IMR-90 (cell line): ENCODE measurements at regions of chr14 and their contacts with region 1.

Region 1: GRCh38 chr14:71514941-71515919 is 417.0 kb upstream of the RGS6 start:
- DNase-seq: no peak
- ATAC-seq: no peak
- H3K4me3 ChIP-seq: no peak overlapping the region
- H3K27ac ChIP-seq: no peak overlapping the region
- H3K4me1 ChIP-seq: no peaks in the 10 kb centered on the region
- H3K27me3 ChIP-seq: no peaks in the 10 kb centered on the region
- CTCF ChIP-seq: no peak
- POLR2A ChIP-seq: no peak
- RAD21 ChIP-seq: no peak

Region 2: DNA sequence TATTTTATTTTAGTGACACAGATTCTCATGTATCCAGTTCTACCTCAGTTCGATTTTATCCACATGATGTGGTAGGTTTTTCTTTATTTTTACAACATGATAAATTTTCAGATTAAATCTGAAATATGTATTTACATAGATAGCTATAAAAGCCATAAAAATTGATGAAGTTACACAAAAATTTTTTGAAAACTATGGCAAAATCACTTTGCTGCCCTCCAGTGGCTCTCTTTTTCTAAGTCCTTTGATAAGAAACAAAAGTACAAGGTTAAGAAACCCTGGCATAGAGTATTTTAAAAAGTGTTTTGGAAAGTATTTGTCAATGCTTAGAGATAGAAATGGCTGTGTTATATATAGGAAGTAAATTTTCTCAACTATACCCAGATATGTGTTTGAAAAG is 503.8 kb before region 1 on chr14:
- CTCF ChIA-PET with region 1: no interaction called
- POLR2A ChIA-PET with region 1: no interaction called
- dilution Hi-C with region 1: no loop called
- in situ Hi-C with region 1: no loop called
- intact Hi-C with region 1: no loop called
- DNase-seq: no peak
- ATAC-seq: no peak
- H3K4me3 ChIP-seq: no peak overlapping the region
- H3K27ac ChIP-seq: no peak overlapping the region
- H3K4me1 ChIP-seq: no peaks in the 10 kb centered on the region; the same call in 1 of the 2 replicates
- H3K27me3 ChIP-seq: no peaks in the 10 kb centered on the region
- CTCF ChIP-seq: peak; percentile 29; the same call in 1 of the 2 replicates
- POLR2A ChIP-seq: no peak
- RAD21 ChIP-seq: no peak

Region 3: GRCh38 chr14:71166180-71166790 is 348.9 kb before region 1 on chr14:
- CTCF ChIA-PET with region 1: no interaction called
- POLR2A ChIA-PET with region 1: interaction called, 12 read pairs
- dilution Hi-C with region 1: no loop called
- in situ Hi-C with region 1: no loop called
- intact Hi-C with region 1: no loop called
- DNase-seq: peak; percentile 85
- ATAC-seq: peak; percentile 89
- H3K4me3 ChIP-seq: no peak overlapping the region
- H3K27ac ChIP-seq: no peak overlapping the region
- H3K4me1 ChIP-seq: peaks cover 10% of the 10 kb centered on the region
- H3K27me3 ChIP-seq: no peaks in the 10 kb centered on the region
- CTCF ChIP-seq: peak; percentile 93
- POLR2A ChIP-seq: no peak
- RAD21 ChIP-seq: peak; percentile 85

Region 4: GRCh38 chr14:71541973-71542690 is 26.9 kb after region 1 on chr14:
- CTCF ChIA-PET with region 1: no interaction called
- POLR2A ChIA-PET with region 1: no interaction called
- dilution Hi-C with region 1: no loop called
- in situ Hi-C with region 1: no loop called
- intact Hi-C with region 1: loop called (anchors 2 kb)
- DNase-seq: no peak
- ATAC-seq: no peak
- H3K4me3 ChIP-seq: no peak overlapping the region
- H3K27ac ChIP-seq: no peak overlapping the region
- H3K4me1 ChIP-seq: peaks cover 10% of the 10 kb centered on the region
- H3K27me3 ChIP-seq: no peaks in the 10 kb centered on the region
- CTCF ChIP-seq: no peak
- POLR2A ChIP-seq: no peak
- RAD21 ChIP-seq: no peak

Region 5: GRCh38 chr14:71555654-71556559 is 40.7 kb after region 1 on chr14:
- CTCF ChIA-PET with region 1: no interaction called
- POLR2A ChIA-PET with region 1: no interaction called
- dilution Hi-C with region 1: no loop called
- in situ Hi-C with region 1: no loop called
- intact Hi-C with region 1: no loop called
- DNase-seq: peak; percentile 43
- ATAC-seq: no peak
- H3K4me3 ChIP-seq: no peak overlapping the region
- H3K27ac ChIP-seq: no peak overlapping the region
- H3K4me1 ChIP-seq: peaks cover 8% of the 10 kb centered on the region
- H3K27me3 ChIP-seq: no peaks in the 10 kb centered on the region
- CTCF ChIP-seq: no peak
- POLR2A ChIP-seq: no peak
- RAD21 ChIP-seq: no peak